Ovary (tissue), 10 donors: ENCODE measurements at regions of chr12 and their contacts with region 1.

Region 1: DNA sequence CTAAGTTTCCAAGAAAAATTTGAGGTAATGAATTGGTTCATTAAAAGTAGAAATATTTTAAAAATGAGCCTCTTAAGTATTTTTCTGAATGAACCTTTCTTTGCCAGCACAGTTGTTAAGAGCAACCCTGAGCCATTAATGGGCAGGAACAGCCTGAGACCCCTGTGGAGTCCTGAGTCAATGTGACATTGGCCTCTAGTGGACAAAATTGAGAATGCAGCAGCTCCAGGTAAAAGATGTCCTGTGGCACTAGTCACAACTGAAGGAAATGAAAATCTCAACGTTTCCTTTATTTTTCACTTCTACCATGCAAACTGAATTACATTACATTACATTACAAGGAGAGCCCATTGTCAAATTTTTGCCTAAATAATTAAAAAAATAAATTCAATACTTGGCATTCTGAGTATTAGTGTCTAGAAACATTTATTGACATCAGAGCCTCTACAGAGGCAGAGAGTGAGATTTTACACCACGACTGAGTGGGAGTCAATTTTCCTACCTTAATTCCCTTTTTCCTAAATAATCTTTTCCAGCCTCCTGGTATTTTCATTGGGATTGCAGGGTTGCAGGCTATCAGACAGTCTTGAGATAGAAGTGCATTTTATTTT is 135.7 kb downstream of the PPM1H start:
- DNase-seq: peak in 4 of 5 donors; percentile 36 to 64 (median 50)
- H3K4me3 ChIP-seq: no peak overlapping the region
- H3K27ac ChIP-seq: no peak overlapping the region
- H3K4me1 ChIP-seq: no peaks in the 10 kb centered on the region
- H3K27me3 ChIP-seq: no peaks in the 10 kb centered on the region
- CTCF ChIP-seq: peak; percentile 74 to 77 (median 75)
- EP300 ChIP-seq: no peak
- POLR2A ChIP-seq: no peak

Region 2: GRCh38 chr12:62414180-62414579 is 385.1 kb before region 1 on chr12:
- intact Hi-C with region 1: no loop called
- DNase-seq: no peak
- H3K4me3 ChIP-seq: no peak overlapping the region
- H3K27ac ChIP-seq: no peak overlapping the region
- H3K4me1 ChIP-seq: no peaks in the 10 kb centered on the region
- H3K27me3 ChIP-seq: no peaks in the 10 kb centered on the region
- CTCF ChIP-seq: no peak
- EP300 ChIP-seq: no peak
- POLR2A ChIP-seq: no peak

Region 3: GRCh38 chr12:62435303-62436163 is 363.7 kb before region 1 on chr12:
- intact Hi-C with region 1: loop called in 2 of 4 experiments (anchors 10 kb)
- DNase-seq: peak; percentile 19 to 59 (median 37)
- H3K4me3 ChIP-seq: peak overlapping the region; percentile 39
- H3K27ac ChIP-seq: no peak overlapping the region
- H3K4me1 ChIP-seq: no peaks in the 10 kb centered on the region
- H3K27me3 ChIP-seq: no peaks in the 10 kb centered on the region
- CTCF ChIP-seq: no peak
- EP300 ChIP-seq: no peak
- POLR2A ChIP-seq: no peak

Region 4: DNA sequence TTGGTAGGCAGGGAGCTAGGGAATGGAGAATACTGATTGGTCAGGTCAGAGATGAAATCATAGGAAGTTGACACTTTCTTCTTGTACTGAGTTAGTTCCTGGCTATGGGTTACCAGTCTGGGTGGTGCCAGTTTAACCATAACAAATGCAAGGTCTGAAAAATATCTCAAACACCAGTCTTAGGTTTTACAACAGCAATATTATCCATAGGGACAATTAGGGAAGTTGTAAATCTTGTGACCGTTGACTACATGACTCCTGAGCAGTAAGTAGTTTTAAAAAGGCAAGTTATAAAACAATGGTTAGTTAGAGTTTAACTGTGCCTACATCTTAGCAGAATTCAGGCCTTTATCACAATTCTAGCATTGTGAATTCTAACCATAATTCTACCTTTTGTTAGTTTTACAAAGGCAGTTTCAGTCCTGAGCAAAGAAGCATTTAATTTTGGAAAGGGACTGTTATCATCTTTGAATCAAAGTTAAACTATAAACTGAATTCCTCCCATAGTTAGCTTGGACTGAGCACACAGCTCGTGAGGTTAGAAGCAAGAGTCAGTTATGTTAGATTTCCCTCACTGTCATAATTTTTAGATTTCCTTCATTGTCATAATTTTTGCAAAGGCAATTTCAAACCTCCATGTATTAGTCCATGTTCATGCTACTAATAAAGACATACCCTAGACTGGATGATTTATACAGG is 352.3 kb before region 1 on chr12:
- intact Hi-C with region 1: loop called in 2 of 4 experiments (anchors 10 kb)
- DNase-seq: no peak
- H3K4me3 ChIP-seq: no peak overlapping the region
- H3K27ac ChIP-seq: no peak overlapping the region
- H3K4me1 ChIP-seq: no peaks in the 10 kb centered on the region
- H3K27me3 ChIP-seq: no peaks in the 10 kb centered on the region
- CTCF ChIP-seq: no peak
- EP300 ChIP-seq: no peak
- POLR2A ChIP-seq: no peak

Region 5: GRCh38 chr12:62458626-62459025 is 340.6 kb before region 1 on chr12:
- intact Hi-C with region 1: loop called in 1 of 4 experiments (anchors 10 kb)
- DNase-seq: no peak
- H3K4me3 ChIP-seq: no peak overlapping the region
- H3K27ac ChIP-seq: no peak overlapping the region
- H3K4me1 ChIP-seq: no peaks in the 10 kb centered on the region
- H3K27me3 ChIP-seq: no peaks in the 10 kb centered on the region
- CTCF ChIP-seq: no peak
- EP300 ChIP-seq: no peak
- POLR2A ChIP-seq: no peak

Region 6: DNA sequence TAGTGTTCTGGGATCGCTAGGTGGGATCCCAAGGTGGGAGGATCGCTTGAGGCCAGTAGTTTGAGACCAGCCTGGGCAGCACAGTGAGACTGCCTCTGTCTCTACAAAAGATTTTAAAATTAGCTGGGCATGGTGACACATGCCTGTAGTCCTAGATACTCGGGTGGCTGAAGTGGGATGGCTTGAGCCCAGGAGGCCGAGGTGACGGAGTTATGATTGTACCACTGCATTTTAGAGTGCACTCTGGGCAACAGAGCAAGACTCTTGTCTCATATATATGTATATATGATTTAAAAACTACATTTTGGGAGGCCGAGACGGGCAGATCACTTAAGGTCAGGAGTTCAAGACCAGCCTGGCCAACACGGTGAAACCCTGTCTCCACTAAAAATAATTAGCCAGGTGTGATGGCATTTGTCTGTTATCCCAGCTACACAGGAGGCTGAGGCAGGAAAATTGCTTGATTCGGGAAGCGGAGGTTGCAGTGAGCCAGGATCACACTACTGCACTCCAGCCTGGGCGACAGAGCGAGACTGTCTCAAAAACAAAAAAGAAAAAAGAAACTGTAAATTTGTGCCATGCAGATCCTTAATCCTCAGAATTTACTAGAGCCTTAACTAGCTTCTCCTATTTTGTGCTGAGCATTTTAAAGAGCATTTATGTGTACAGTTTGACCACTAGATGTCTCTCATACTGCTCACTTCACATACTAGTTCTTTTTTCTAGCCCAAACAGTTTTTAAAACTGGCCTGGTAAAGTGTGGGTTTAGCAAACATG is 217.8 kb before region 1 on chr12:
- intact Hi-C with region 1: loop called in 3 of 4 experiments (anchors 5 kb)
- DNase-seq: no peak
- H3K4me3 ChIP-seq: no peak overlapping the region
- H3K27ac ChIP-seq: no peak overlapping the region
- H3K4me1 ChIP-seq: no peaks in the 10 kb centered on the region
- H3K27me3 ChIP-seq: no peaks in the 10 kb centered on the region
- CTCF ChIP-seq: peak; percentile 31 to 71 (median 53)
- EP300 ChIP-seq: no peak
- POLR2A ChIP-seq: no peak

Region 7: DNA sequence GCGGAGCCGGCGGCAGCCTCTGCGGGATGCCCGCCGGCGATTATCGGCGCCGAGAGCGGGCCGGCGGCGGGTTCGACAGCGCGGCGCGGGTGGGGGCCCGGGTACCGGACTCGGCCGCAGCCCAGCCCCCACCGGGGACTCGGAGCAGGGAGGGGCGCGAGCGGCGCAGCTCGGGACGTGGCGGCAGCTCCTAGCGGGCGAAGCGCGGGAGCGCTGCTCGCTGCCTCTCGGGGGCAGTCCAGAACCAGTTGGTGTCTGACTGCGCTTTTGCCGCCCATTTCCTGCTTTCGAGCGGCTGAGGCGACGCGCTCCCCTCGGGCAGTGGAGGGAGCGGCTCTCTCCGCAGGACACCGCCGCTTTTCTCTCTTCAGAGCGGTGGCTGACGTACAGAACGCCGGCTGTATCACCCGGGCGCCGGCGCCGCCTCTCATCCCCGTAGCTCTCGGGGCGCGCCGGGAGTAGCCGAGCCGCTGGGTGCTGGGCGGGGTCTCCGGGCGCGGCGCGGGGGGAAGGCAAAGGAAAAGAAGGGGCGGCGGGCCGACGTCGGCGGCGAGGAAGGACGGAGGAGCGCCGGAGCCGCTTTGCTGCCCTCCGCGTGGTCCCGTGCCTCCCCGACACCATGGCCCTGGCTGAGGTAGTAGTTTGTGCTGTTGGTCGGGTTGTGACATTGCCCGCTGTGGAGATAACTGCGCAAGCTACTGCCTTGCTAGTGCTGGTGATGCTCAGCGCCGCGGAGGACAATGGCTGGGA is 196.0 kb before region 1 on chr12:
- intact Hi-C with region 1: loop called in 3 of 4 experiments (anchors 5 to 10 kb)
- DNase-seq: peak; percentile 86 to 91 (median 90)
- H3K4me3 ChIP-seq: peak overlapping the region; percentile 54
- H3K27ac ChIP-seq: peak overlapping the region; percentile 98 to 100
- H3K4me1 ChIP-seq: peaks cover 1% of the 10 kb centered on the region
- H3K27me3 ChIP-seq: no peaks in the 10 kb centered on the region
- CTCF ChIP-seq: peak; percentile 29 to 81 (median 64)
- EP300 ChIP-seq: no peak
- POLR2A ChIP-seq: peak; percentile 1

Region 8: DNA sequence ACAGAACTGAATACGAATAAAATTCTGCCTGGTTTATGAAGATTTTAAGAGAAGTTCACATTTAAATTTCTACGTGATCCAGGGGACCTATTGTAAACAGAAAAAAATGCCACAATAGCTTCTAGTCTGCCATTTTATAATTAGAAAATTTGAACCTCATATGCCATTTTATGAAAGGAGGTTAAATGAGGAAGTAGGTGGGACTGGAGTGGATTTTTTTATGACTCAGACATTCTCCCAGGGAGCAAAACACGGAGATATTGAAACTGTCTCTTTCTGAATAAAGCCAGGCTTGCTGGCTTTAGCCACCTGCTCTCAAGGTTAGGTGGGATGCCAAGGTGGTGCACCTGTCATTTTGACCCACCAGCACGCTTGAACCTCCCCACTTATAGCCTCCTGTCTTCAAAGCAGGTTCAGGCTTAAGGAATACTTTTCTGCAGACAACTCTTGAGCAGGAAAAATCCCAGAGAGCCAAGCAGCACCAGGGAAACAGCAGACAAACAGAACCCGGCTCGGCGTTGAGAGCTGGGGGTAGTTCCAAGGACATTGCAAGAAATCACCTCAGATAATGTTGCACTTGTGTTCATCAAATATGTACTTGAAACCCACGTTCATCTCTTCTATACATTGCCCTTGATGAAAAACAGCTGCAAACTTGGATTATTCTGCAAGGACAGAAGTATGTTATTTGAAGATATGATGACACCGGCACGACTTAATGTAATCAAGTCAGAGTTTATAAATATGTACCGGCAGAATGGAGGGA is 68.0 kb before region 1 on chr12:
- intact Hi-C with region 1: no loop called
- DNase-seq: no peak
- H3K4me3 ChIP-seq: no peak overlapping the region
- H3K27ac ChIP-seq: no peak overlapping the region
- H3K4me1 ChIP-seq: peaks cover 7% of the 10 kb centered on the region
- H3K27me3 ChIP-seq: no peaks in the 10 kb centered on the region
- CTCF ChIP-seq: no peak
- EP300 ChIP-seq: no peak
- POLR2A ChIP-seq: no peak

Region 9: GRCh38 chr12:63068857-63069442 is 269.7 kb after region 1 on chr12:
- intact Hi-C with region 1: loop called in 1 of 4 experiments (anchors 10 kb)
- DNase-seq: no peak
- H3K4me3 ChIP-seq: no peak overlapping the region
- H3K27ac ChIP-seq: no peak overlapping the region
- H3K4me1 ChIP-seq: no peaks in the 10 kb centered on the region
- H3K27me3 ChIP-seq: no peaks in the 10 kb centered on the region
- CTCF ChIP-seq: peak in 1 of 3 donors; percentile 48
- EP300 ChIP-seq: no peak
- POLR2A ChIP-seq: no peak